ENCODE measurements at regions of chr3 and their contacts with region 1.

Region 1: DNA sequence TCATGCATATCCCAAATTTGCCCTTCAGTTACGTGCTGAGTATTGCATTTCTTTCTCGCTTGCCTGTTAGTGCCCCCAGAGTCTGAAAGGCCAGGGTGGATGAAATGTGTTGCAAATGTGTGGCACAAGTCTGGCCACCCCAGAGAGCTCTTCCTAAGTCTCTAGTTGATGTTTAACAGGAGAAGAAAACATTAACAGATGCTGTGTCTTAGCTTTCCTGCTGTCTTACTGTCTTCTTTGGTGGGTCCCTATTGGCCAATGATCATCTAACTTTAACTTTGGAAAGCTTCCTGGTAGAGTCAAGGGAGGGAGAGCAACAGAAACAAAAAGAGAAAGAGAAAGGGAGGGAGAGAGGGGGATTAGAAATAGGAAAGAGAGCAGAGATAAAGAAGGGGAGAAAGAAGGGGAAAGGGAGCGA is 76.7 kb upstream of the P3H2 start:
- DNase-seq: no peak
- ATAC-seq: peak; percentile 54
- H3K4me3 ChIP-seq: no peak overlapping the region
- H3K27ac ChIP-seq: no peak overlapping the region
- H3K4me1 ChIP-seq: no peaks in the 10 kb centered on the region
- H3K27me3 ChIP-seq: no peaks in the 10 kb centered on the region
- CTCF ChIP-seq: no peak
- EP300 ChIP-seq: no peak
- POLR2A ChIP-seq: no peak
- RAD21 ChIP-seq: no peak

Region 2: GRCh38 chr3:189123595-189124387 is 1073.6 kb before region 1 on chr3:
- CTCF ChIA-PET with region 1: no interaction called
- POLR2A ChIA-PET with region 1: no interaction called
- in situ Hi-C with region 1: no loop called
- intact Hi-C with region 1: no loop called
- DNase-seq: no peak
- ATAC-seq: no peak
- H3K4me3 ChIP-seq: no peak overlapping the region
- H3K27ac ChIP-seq: no peak overlapping the region
- H3K4me1 ChIP-seq: no peaks in the 10 kb centered on the region
- H3K27me3 ChIP-seq: 0 out of 5 replicates have a peak, but pooled peaks cover 0 to 3% of the 10 kb centered on the region in 2 experiments
- CTCF ChIP-seq: no peak
- EP300 ChIP-seq: no peak
- POLR2A ChIP-seq: no peak
- RAD21 ChIP-seq: no peak

Region 3: GRCh38 chr3:189975391-189975990 is 221.9 kb before region 1 on chr3:
- CTCF ChIA-PET with region 1: no interaction called
- POLR2A ChIA-PET with region 1: no interaction called
- in situ Hi-C with region 1: loop called (anchors 5 kb)
- intact Hi-C with region 1: no loop called
- DNase-seq: no peak
- ATAC-seq: no peak
- H3K4me3 ChIP-seq: no peak overlapping the region
- H3K27ac ChIP-seq: no peak overlapping the region
- H3K4me1 ChIP-seq: no peaks in the 10 kb centered on the region
- H3K27me3 ChIP-seq: no peaks in the 10 kb centered on the region
- CTCF ChIP-seq: no peak
- EP300 ChIP-seq: no peak
- POLR2A ChIP-seq: no peak
- RAD21 ChIP-seq: no peak

Region 4: DNA sequence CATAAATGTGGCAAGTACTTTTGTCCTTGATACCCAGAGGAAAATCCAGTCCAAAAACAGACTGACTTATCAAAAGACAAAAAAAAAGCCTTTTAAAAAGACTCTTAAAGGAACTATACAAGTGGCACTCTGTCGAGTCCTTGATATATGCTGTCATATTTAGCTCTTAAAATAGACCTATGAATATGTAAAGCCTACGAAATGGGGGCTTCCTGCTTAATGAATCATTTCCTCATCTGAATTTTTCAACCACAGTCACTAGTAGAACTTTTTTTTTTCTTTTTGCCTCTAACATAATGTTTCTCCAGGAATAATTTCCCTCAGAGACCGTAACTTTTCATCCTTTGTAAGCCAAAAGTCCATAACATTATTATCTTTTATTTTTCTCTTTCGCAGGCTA is 172.4 kb before region 1 on chr3:
- CTCF ChIA-PET with region 1: no interaction called
- POLR2A ChIA-PET with region 1: no interaction called
- in situ Hi-C with region 1: no loop called
- intact Hi-C with region 1: no loop called
- DNase-seq: no peak
- ATAC-seq: no peak
- H3K4me3 ChIP-seq: no peak overlapping the region
- H3K27ac ChIP-seq: no peak overlapping the region
- H3K4me1 ChIP-seq: no peaks in the 10 kb centered on the region
- H3K27me3 ChIP-seq: no peaks in the 10 kb centered on the region
- CTCF ChIP-seq: no peak
- EP300 ChIP-seq: no peak
- POLR2A ChIP-seq: no peak
- RAD21 ChIP-seq: no peak

Region 5: DNA sequence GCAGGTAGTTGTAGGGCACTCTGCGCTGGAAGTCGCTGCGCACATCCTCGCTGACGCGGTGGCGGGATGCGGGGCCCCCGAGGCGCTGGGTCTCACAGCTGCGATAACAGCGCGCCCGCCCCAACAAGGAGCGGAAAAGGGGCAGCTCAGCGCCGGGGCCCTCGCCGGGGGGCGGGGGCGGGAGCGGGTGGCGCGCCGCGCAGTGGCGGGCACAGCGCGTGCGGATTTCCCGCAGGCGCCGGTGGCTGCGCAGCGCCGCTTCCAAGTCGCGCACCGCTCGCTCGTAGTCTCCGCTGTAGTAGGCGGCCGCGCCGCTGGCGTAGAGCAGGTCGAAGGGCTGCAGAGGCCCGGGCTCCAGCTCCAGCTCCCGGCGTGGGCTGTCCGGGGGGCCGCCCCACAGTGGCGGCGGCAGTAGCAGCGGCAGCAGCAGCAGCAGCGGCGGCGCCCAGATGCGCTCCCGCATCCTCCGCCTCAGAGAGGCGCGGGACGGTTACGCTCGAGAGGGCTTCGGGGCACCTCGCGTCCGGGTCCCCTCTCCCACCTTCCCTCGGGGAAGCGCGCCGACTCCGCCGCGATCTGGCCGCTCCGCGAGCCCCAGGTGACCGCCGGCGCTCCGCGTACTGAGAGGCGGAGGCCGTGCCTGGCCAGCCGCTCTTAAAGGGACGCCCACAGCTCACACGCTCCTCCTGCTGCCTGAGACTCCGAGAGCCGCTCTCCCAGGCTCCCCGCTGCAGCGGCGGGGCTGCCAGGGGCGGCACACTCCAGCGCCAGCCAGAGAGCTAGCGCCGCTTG is 76.9 kb before region 1 on chr3 and contains the start of gene P3H2:
- CTCF ChIA-PET with region 1: no interaction called
- POLR2A ChIA-PET with region 1: no interaction called
- in situ Hi-C with region 1: no loop called
- intact Hi-C with region 1: loop called (anchors 10 kb)
- DNase-seq: peak; percentile 66
- ATAC-seq: peak; percentile 100
- H3K4me3 ChIP-seq: peak within 1 kb of the TSS; percentile 58 to 70 (median 65); a peak in 5 of 6 replicates
- H3K27ac ChIP-seq: no peak within 1 kb of the TSS
- H3K4me1 ChIP-seq: no peaks in the 10 kb centered on the region
- H3K27me3 ChIP-seq: peaks cover 0 to 17% of the 10 kb centered on the region in 2 experiments; a peak in 4 of 5 replicates
- CTCF ChIP-seq: peak; percentile 63
- EP300 ChIP-seq: no peak
- POLR2A ChIP-seq: no peak
- RAD21 ChIP-seq: peak; percentile 35
- total RNA-seq, gene P3H2: not detected in 2 replicates

Region 6: GRCh38 chr3:190239325-190239724 is 42.0 kb after region 1 on chr3:
- CTCF ChIA-PET with region 1: no interaction called
- POLR2A ChIA-PET with region 1: no interaction called
- in situ Hi-C with region 1: no loop called
- intact Hi-C with region 1: no loop called
- DNase-seq: no peak
- ATAC-seq: no peak
- H3K4me3 ChIP-seq: no peak overlapping the region
- H3K27ac ChIP-seq: no peak overlapping the region
- H3K4me1 ChIP-seq: no peaks in the 10 kb centered on the region
- H3K27me3 ChIP-seq: no peaks in the 10 kb centered on the region
- CTCF ChIP-seq: no peak
- EP300 ChIP-seq: no peak
- POLR2A ChIP-seq: no peak
- RAD21 ChIP-seq: no peak

Region 7: DNA sequence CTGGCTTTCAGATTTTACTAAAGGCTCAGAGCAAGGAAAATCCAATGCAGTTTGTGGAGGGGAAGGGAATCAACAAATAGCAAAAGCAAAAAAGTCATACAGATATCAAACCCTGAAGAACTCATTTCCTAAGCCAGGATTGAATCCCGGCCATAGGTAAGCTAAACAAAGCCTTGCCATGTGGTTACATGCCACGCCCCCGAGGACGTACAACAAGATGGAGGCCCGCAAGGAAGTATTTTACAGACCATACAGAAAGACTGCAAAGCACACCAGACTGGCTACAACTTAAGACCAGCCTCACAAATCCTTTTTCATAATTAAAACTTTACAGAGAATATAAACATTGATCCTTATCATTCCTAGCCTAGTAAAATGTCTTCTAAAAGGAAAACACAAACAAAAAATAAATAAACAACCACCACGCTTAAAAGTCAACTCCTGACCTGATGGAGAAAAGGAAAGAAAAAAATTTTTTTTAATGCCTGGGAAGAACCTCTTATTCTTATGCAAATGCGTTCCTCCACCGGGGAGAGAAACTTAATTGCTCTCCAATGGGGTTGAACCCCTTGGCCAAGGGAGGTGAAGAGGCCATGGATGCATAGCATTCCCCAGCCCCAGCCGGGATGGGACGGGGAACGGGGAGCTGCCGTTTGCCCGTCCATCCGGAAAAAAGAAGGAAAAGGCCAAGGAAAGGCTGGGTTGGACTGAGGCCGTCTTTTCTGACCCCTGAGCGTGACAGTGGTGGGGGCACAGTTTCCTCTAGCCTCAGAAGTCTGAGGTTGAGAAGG is 355.8 kb after region 1 on chr3:
- CTCF ChIA-PET with region 1: no interaction called
- POLR2A ChIA-PET with region 1: no interaction called
- in situ Hi-C with region 1: no loop called
- intact Hi-C with region 1: no loop called
- DNase-seq: no peak
- ATAC-seq: no peak
- H3K4me3 ChIP-seq: no peak overlapping the region
- H3K27ac ChIP-seq: no peak overlapping the region
- H3K4me1 ChIP-seq: peaks cover 64% of the 10 kb centered on the region
- H3K27me3 ChIP-seq: no peaks in the 10 kb centered on the region
- CTCF ChIP-seq: no peak
- EP300 ChIP-seq: no peak
- POLR2A ChIP-seq: no peak
- RAD21 ChIP-seq: no peak

Measured in HepG2 (cell line).